ENCODE measurements at regions of chr5 and their contacts with region 1.

Region 1: DNA sequence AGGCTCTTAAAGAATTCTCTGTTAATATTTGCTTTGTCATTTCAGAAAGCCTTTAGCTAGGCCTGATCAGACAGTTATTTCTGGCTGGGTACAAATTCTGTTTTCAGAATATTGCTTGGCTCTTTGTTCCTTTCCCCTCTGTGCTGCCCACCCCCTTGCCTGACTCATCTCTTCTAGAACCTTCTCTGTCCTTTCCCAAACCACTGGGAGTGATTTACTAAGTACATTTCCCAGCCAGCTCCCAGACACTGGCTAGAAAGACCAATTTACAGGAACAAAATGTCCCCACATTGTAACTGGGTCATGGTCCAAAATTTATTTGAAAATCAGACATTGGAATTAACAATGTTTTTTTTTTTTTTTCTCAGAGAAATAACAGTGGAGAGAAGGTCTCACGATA is 133.1 kb upstream of the MAP1B start:
- DNase-seq: no peak
- ATAC-seq: no peak
- H3K4me3 ChIP-seq: no peak overlapping the region
- H3K27ac ChIP-seq: no peak overlapping the region
- H3K4me1 ChIP-seq: no peaks in the 10 kb centered on the region
- H3K27me3 ChIP-seq: peaks cover 2% of the 10 kb centered on the region
- CTCF ChIP-seq: no peak

Region 2: GRCh38 chr5:71809446-71809845 is 164.7 kb before region 1 on chr5:
- CTCF ChIA-PET with region 1: no interaction called
- POLR2A ChIA-PET with region 1: interaction called, 10 read pairs
- in situ Hi-C with region 1: no loop called
- intact Hi-C with region 1: no loop called
- DNase-seq: no peak
- ATAC-seq: no peak
- H3K4me3 ChIP-seq: no peak overlapping the region
- H3K27ac ChIP-seq: no peak overlapping the region
- H3K4me1 ChIP-seq: no peaks in the 10 kb centered on the region
- H3K27me3 ChIP-seq: peaks cover 28% of the 10 kb centered on the region
- CTCF ChIP-seq: no peak

Region 3: DNA sequence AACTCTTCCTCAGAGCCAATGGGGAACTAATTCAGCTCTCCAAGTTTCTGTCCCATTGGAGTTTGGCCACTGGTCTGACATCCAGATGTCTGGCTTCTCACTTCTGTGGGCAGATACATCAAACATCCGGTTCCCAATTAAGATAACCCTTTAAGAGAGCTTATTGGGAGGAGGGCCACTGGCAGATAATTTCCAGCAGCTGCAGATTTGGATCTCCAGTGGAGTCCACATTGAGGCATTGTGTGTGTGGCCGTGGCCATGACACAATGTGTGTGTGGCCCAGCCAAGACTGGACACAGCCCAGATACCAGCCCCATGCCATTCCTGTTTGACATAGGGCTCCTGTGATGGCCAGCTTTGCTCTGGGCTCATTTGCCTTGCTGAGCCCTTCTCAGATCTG is 22.6 kb after region 1 on chr5:
- CTCF ChIA-PET with region 1: no interaction called
- POLR2A ChIA-PET with region 1: no interaction called
- in situ Hi-C with region 1: no loop called
- intact Hi-C with region 1: no loop called
- DNase-seq: no peak
- ATAC-seq: no peak
- H3K4me3 ChIP-seq: no peak overlapping the region
- H3K27ac ChIP-seq: no peak overlapping the region
- H3K4me1 ChIP-seq: no peaks in the 10 kb centered on the region; the same call in 1 of the 2 replicates
- H3K27me3 ChIP-seq: peaks cover 13% of the 10 kb centered on the region
- CTCF ChIP-seq: no peak

Measured in Panc1 (cell line).